CD4-positive, alpha-beta memory T cell (primary cell): ENCODE measurements at regions of chr5 and their contacts with region 1.

Region 1: DNA sequence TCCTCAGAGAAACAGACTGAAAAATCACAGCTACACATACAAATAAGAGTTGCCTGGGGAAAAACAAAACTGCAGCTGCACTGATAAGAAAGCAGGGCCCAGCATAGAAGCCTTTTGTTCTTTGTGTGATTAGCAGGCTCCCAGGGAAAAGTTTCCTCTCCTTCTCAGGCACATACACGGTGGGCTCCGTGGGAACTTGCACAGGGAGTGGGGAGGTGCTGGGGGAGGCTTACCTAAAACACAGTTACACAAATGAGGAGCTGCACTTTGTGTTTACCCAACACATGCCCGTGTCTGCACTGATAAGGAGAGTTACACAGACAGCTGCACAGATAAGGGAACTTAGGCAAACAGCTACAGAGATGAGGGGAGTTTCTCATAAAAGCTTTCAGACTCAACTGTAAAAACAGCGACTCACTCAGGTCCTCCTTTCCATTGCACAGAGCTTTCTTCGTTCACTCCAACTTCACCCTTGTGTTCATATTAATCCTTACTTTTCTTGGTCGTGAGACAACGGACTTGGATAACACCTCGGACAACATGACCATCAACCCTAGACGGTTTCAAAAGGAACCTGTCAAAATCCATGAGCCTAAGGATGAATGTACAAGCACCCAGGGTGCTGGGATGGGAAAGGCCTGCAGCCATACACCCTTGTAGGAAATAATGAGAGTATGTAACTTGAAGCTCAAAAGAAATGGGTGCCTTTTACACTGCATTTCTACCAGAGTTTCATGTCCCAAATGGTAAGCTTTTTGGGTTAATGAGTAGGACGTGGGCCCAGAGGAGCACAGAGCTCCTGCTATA is 50.8 kb downstream of the SERINC5 start:
- DNase-seq: no peak
- H3K4me3 ChIP-seq: no peak overlapping the region
- H3K4me3 Mint-ChIP-seq: peak overlapping the region; percentile 40 to 71 (median 58)
- H3K27ac ChIP-seq: peak overlapping the region; percentile 16
- H3K27ac Mint-ChIP-seq: peak overlapping the region; percentile 81 to 99 (median 88)
- H3K4me1 ChIP-seq: peaks cover 82% of the 10 kb centered on the region
- H3K4me1 Mint-ChIP-seq: peaks cover 72 to 94% (median 82%) of the 10 kb centered on the region in 4 donors
- H3K27me3 ChIP-seq: no peaks in the 10 kb centered on the region
- H3K27me3 Mint-ChIP-seq: no peaks in the 10 kb centered on the region

Region 2: GRCh38 chr5:80134879-80135278 is 70.1 kb before region 1 on chr5:
- CTCF ChIA-PET with region 1: interaction called, 6 read pairs
- POLR2A ChIA-PET with region 1: interaction called, 10 read pairs
- intact Hi-C with region 1: no loop called
- DNase-seq: no peak
- H3K4me3 ChIP-seq: no peak overlapping the region
- H3K4me3 Mint-ChIP-seq: peak overlapping the region; percentile 7 to 87 (median 77)
- H3K27ac ChIP-seq: peak overlapping the region; percentile 54
- H3K27ac Mint-ChIP-seq: peak overlapping the region; percentile 69 to 97 (median 92)
- H3K4me1 ChIP-seq: peaks cover 86% of the 10 kb centered on the region
- H3K4me1 Mint-ChIP-seq: peaks cover 70 to 88% (median 80%) of the 10 kb centered on the region in 4 donors
- H3K27me3 ChIP-seq: no peaks in the 10 kb centered on the region
- H3K27me3 Mint-ChIP-seq: no peaks in the 10 kb centered on the region

Region 3: DNA sequence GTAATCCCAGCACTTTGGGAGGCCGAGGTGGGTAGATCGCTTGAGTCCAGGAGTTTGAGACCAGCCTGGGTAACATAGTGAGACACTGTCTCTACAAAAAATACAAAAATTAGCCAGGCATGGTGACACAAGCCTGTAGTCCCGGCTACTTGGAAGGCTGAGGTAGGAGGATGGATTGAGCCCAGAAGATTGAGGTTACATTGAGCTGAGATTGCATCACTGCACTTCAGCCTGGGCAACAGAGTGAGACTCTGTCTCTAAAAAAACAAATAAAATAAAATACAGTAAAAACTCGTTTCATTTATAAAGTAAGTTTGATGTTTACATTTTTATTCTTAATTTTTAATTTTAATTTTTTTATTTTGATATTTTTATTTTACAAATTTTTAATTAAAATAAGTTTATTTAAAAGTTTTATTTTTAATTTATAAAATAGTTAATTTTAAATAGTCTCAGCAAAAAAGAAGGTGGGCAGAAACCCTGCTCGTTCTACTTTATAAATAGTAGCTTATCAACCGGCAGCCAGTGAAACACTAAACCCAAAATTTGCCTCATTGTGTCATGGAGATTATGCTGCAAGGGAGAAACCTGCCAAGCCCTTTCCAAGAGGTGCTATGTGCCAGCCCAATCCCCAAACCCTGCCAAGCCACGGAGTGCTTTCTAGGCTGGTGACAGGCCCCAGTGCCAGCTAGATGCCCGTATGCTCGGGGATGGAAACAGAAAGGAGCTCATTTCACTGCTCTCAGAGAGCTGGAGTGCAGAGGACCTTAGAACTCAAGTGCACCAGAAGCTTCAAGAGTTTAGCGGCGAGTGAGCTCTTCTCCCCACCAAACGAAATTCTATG is 12.0 kb after region 1 on chr5:
- CTCF ChIA-PET with region 1: interaction called, 12 read pairs
- POLR2A ChIA-PET with region 1: interaction called, 45 read pairs
- intact Hi-C with region 1: loop called (anchors 1 kb)
- DNase-seq: peak in 1 of 5 donors; percentile 55
- H3K4me3 ChIP-seq: peak overlapping the region in 1 of 2 donors; percentile 25
- H3K4me3 Mint-ChIP-seq: peak overlapping the region in 7 of 8 donors; percentile 46 to 96 (median 81)
- H3K27ac ChIP-seq: peak overlapping the region; percentile 37
- H3K27ac Mint-ChIP-seq: peak overlapping the region; percentile 31 to 99 (median 93)
- H3K4me1 ChIP-seq: peaks cover 98% of the 10 kb centered on the region
- H3K4me1 Mint-ChIP-seq: peaks cover 75 to 97% (median 86%) of the 10 kb centered on the region in 4 donors
- H3K27me3 ChIP-seq: no peaks in the 10 kb centered on the region
- H3K27me3 Mint-ChIP-seq: no peaks in the 10 kb centered on the region

Region 4: DNA sequence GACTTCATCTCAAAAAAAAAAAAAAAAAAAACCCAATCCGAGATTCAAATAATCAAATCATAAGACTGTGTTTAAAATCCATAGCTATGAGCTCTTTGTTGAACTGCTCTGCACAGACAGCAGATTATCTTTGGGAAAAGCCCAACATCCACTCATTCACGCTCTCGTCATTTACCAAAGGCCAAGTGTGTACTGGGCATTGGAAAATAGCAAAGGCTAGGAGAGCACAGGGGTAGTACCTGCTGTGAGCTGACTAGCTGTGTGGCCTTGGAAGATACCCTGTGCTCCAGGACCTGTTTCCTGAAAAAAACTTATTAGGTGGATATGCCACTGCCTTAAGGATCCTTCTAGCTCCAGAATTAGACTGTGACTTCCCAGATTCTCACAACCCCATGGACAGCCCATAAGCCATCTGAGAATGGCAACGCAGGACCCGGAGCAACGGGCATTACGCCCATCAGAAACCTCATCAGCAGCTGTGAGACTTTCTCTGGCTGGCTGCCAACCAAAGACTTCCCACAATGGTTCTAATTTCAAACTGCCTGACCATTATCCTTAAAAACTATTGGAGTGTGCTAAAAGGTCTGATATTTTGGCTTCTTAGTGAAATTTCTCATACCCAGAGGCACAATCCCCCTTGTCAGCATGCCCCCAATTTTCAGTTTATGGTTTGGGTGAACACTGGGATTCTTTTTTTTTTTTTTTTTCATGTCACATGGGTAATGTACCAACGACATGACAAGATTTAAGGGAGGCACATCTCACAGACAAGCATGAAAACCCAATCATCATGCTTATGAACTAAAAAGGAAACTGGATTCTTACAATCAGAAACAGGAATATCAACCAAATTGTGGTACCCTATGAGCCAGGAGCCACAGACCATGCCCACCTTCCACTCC is 34.0 kb after region 1 on chr5:
- CTCF ChIA-PET with region 1: interaction called, 10 read pairs
- POLR2A ChIA-PET with region 1: interaction called, 5 read pairs
- intact Hi-C with region 1: no loop called
- DNase-seq: no peak
- H3K4me3 ChIP-seq: no peak overlapping the region
- H3K4me3 Mint-ChIP-seq: peak overlapping the region; percentile 27 to 87 (median 82)
- H3K27ac ChIP-seq: peak overlapping the region; percentile 20
- H3K27ac Mint-ChIP-seq: peak overlapping the region; percentile 63 to 93 (median 86)
- H3K4me1 ChIP-seq: peaks cover 78% of the 10 kb centered on the region
- H3K4me1 Mint-ChIP-seq: peaks cover 54 to 88% (median 70%) of the 10 kb centered on the region in 4 donors
- H3K27me3 ChIP-seq: no peaks in the 10 kb centered on the region
- H3K27me3 Mint-ChIP-seq: no peaks in the 10 kb centered on the region

Region 5: GRCh38 chr5:80308526-80308925 is 103.5 kb after region 1 on chr5:
- CTCF ChIA-PET with region 1: interaction called, 11 read pairs
- POLR2A ChIA-PET with region 1: no interaction called
- intact Hi-C with region 1: no loop called
- DNase-seq: no peak
- H3K4me3 ChIP-seq: no peak overlapping the region
- H3K4me3 Mint-ChIP-seq: no peak overlapping the region
- H3K27ac ChIP-seq: no peak overlapping the region
- H3K27ac Mint-ChIP-seq: no peak overlapping the region
- H3K4me1 ChIP-seq: no peaks in the 10 kb centered on the region
- H3K4me1 Mint-ChIP-seq: peaks cover 0 to 1% (median 0%) of the 10 kb centered on the region in 4 donors
- H3K27me3 ChIP-seq: no peaks in the 10 kb centered on the region
- H3K27me3 Mint-ChIP-seq: no peaks in the 10 kb centered on the region

Region 6: GRCh38 chr5:80641353-80641752 is 436.3 kb after region 1 on chr5:
- CTCF ChIA-PET with region 1: no interaction called
- POLR2A ChIA-PET with region 1: no interaction called
- intact Hi-C with region 1: no loop called
- DNase-seq: no peak
- H3K4me3 ChIP-seq: no peak overlapping the region
- H3K4me3 Mint-ChIP-seq: no peak overlapping the region
- H3K27ac ChIP-seq: no peak overlapping the region
- H3K27ac Mint-ChIP-seq: peak overlapping the region in 2 of 7 donors; percentile 8 to 77
- H3K4me1 ChIP-seq: no peaks in the 10 kb centered on the region
- H3K4me1 Mint-ChIP-seq: peaks cover 0 to 4% (median 2%) of the 10 kb centered on the region in 4 donors
- H3K27me3 ChIP-seq: no peaks in the 10 kb centered on the region
- H3K27me3 Mint-ChIP-seq: no peaks in the 10 kb centered on the region

Region 7: DNA sequence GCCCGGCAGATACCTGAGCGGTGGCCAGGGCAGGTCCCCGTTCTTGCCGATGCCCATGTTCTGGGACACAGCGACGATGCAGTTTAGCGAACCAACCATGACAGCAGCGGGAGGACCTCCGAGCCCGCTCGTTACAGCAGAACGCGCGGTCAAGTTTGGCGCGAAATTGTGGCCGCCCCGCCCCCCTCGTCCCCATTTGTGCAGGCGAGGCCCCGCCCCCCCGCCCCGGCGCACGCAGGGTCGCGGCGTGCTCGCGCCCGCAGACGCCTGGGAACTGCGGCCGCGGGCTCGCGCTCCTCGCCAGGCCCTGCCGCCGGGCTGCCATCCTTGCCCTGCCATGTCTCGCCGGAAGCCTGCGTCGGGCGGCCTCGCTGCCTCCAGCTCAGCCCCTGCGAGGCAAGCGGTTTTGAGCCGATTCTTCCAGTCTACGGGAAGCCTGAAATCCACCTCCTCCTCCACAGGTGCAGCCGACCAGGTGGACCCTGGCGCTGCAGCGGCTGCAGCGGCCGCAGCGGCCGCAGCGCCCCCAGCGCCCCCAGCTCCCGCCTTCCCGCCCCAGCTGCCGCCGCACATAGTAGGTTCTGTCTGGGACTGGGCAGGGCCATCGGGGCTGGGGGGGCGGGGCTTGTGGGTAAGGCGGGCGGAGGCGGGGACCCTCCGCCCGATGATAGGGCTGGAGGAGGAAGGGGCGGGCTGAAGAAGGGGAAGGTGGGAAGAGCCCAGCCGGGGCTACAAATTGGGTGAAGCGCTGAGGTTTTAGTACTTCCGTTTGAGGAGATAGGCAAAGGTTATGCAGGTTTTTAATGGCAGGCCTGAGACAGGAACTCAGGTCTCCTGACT is 449.6 kb after region 1 on chr5 and contains the starts of genes DHFR and MSH3:
- CTCF ChIA-PET with region 1: no interaction called
- POLR2A ChIA-PET with region 1: no interaction called
- intact Hi-C with region 1: no loop called
- DNase-seq: peak; percentile 86 to 91 (median 91)
- H3K4me3 ChIP-seq: peak within 1 kb of the TSS; percentile 64 to 79
- H3K4me3 Mint-ChIP-seq: peak within 1 kb of the TSS; percentile 86 to 97 (median 94)
- H3K27ac ChIP-seq: peak within 1 kb of the TSS; percentile 67
- H3K27ac Mint-ChIP-seq: peak within 1 kb of the TSS; percentile 86 to 99 (median 97)
- H3K4me1 ChIP-seq: peaks cover 34% of the 10 kb centered on the region
- H3K4me1 Mint-ChIP-seq: peaks cover 20 to 37% (median 27%) of the 10 kb centered on the region in 4 donors
- H3K27me3 ChIP-seq: no peaks in the 10 kb centered on the region
- H3K27me3 Mint-ChIP-seq: no peaks in the 10 kb centered on the region
- total RNA-seq, gene DHFR: 18.5 to 19.2 TPM
- total RNA-seq, gene MSH3: 14.3 to 17.1 TPM